Activated T-helper 2 cell treated with anti-CD3 and anti-CD28 coated beads, Interferon-gamma antibody, Interleukin-2, Interleukin-4, amounts not matched to agents 10 μg/mL and 5 μg/mL and 100 μg/mL, durations not matched to agents 14 hours and 24 hours and 36 hours (primary cell): ENCODE measurements at regions of chr22 and their contacts with region 1.

Region 1: GRCh38 chr22:20156611-20157429 is 6.0 kb upstream of the CCDC188 start:
- DNase-seq: peak; percentile 77
- H3K4me3 Mint-ChIP-seq: no peak overlapping the region
- H3K27ac Mint-ChIP-seq: no peak overlapping the region
- H3K4me1 Mint-ChIP-seq: peaks cover 2% of the 10 kb centered on the region
- H3K27me3 Mint-ChIP-seq: no peaks in the 10 kb centered on the region

Region 2: GRCh38 chr22:20186183-20186870 is 29.5 kb after region 1 on chr22:
- intact Hi-C with region 1: no loop called
- DNase-seq: no peak
- H3K4me3 Mint-ChIP-seq: no peak overlapping the region
- H3K27ac Mint-ChIP-seq: no peak overlapping the region
- H3K4me1 Mint-ChIP-seq: no peaks in the 10 kb centered on the region
- H3K27me3 Mint-ChIP-seq: no peaks in the 10 kb centered on the region

Region 3: DNA sequence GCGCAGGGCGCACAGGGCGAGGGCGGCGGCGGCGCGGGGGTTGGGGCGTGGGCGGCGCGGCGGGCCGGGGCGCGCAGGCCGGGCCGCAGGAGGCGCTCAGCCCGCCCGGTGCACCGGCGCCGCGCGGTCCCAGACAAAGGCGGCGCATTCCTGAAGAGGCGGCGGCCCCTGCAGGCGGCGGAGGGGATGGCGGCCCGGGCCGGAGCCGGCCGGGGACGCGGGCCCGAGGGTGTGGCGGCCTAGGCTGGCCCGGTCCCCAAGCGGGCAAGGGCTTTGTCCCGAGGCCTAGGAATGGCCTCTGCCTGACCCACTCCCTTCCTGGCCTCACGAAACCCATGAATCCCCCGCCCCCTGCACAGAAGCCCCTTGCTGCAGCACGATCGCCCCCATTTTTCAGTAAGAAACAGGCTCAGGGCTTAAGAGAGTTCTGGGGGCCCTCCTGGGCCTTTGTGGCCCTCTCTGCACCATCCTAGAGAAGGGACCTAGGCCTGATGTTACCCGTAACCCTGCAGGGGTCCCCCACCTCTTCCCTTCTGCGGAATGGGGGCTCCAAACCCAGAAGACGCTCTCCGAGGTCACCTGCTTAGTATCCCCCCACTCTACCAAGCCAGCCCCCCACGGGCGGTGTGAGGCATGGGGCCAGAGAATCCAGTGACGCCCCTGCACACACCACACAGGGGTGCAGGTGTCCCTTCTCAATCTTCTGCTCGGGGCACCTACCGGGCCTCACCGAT is 111.6 kb after region 1 on chr22 and contains the start of gene RTN4R:
- intact Hi-C with region 1: loop called (anchors 5 kb)
- DNase-seq: peak; percentile 51
- H3K4me3 Mint-ChIP-seq: peak within 1 kb of the TSS; percentile 77
- H3K27ac Mint-ChIP-seq: peak within 1 kb of the TSS; percentile 12
- H3K4me1 Mint-ChIP-seq: peaks cover 1% of the 10 kb centered on the region
- H3K27me3 Mint-ChIP-seq: peaks cover 5% of the 10 kb centered on the region
- total RNA-seq, gene RTN4R: 1.9 and 2.2 TPM in 2 replicates

Region 4: GRCh38 chr22:20284471-20285086 is 127.8 kb after region 1 on chr22:
- intact Hi-C with region 1: loop called (anchors 1 kb)
- DNase-seq: no peak
- H3K4me3 Mint-ChIP-seq: no peak overlapping the region
- H3K27ac Mint-ChIP-seq: no peak overlapping the region
- H3K4me1 Mint-ChIP-seq: peaks cover under 1% of the 10 kb centered on the region
- H3K27me3 Mint-ChIP-seq: no peaks in the 10 kb centered on the region

Region 5: DNA sequence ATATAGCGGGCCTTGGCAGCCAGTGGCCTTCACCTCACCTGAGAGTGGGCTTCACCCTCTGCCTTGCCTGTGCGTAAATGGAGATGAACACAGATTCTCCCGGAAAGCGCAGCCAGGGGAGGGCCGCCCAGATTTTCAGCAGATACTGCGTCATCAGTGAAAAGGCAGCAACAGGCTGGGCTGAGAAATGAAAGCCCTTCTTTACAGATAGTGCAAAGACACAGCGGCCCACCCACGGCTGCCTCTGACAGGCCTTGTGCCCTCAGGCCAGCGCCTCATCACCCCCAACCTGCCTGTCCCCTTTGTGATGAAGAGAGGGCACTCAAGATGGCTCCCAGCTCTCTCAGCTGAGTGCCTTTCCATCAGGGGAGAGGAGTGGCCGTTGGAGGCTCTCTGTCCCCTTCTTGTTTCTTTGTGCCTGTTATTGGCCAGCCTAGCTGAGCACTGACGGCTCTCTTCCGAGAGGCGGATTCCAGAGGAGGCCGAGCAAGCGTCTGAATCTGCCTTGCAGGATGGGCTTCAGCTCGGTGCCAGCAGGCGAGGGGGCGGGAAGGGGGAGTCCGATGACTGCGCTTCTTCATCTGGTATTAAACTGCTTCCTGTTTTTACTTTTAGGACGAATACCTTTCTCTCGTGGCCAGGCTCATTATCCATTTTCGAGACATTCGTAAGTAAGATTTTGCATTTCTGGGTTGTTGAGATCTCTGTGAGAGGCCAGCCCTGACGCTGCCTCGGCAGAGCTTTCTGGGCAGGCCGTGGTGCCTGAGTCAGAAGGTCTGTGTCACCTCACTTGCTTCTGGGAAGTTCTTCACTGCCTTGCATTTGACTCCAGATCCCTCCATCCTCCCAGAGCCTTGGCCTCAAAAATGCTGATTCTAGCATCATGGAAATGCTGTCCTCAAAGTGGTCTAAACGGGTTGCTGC is 394.3 kb after region 1 on chr22:
- intact Hi-C with region 1: no loop called
- DNase-seq: peak; percentile 18
- H3K4me3 Mint-ChIP-seq: peak overlapping the region; percentile 54
- H3K27ac Mint-ChIP-seq: peak overlapping the region; percentile 94
- H3K4me1 Mint-ChIP-seq: peaks cover 66% of the 10 kb centered on the region
- H3K27me3 Mint-ChIP-seq: no peaks in the 10 kb centered on the region